ENCODE measurements at regions of chr11 and their contacts with region 1.

Region 1: DNA sequence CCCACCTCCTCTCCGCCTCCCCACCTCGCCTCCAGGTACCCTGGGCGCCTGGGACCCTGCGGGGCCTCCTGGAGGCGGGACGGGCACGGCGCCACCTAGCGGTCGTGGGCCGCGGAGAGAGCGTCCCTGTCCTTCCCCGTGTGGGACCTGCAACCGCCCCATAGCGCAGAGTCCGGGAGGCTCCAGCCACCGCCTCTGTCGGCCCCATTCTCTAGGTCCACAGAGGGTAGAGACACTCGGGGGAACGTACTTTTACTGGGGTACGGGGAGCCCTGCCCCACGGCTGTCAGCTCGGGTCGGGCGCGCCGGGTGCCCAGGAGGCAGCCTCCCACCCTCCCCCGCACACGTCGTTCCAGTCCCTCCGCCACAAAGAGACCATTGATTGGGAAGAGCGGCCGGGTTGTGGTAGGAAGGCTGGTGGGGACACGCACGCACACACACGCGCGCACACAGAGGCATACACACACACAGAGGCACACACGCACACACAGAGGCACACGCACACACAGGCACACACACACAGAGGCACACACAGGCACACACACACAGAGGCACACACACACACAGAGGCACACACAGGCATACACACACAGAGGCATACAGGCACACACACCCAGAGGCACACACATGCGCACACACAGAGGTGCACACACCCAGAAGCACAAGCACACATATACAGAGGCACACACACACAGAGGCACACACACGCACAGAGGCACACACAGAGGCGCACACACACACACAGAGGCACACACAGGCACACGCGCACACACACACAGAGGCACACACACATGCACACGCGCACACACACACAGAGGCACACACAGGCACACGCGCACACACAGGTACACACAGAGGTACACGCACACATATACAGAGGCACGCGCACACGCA is 12.6 kb upstream of the NECTIN1 start:
- DNase-seq: no peak
- H3K4me3 ChIP-seq: peak overlapping the region; percentile 36 to 39
- H3K27ac ChIP-seq: no peak overlapping the region
- H3K4me1 ChIP-seq: peaks cover 0 to 7% of the 10 kb centered on the region in 2 donors
- H3K27me3 ChIP-seq: no peaks in the 10 kb centered on the region
- CTCF ChIP-seq: peak; percentile 45 to 75 (median 67)

Region 2: DNA sequence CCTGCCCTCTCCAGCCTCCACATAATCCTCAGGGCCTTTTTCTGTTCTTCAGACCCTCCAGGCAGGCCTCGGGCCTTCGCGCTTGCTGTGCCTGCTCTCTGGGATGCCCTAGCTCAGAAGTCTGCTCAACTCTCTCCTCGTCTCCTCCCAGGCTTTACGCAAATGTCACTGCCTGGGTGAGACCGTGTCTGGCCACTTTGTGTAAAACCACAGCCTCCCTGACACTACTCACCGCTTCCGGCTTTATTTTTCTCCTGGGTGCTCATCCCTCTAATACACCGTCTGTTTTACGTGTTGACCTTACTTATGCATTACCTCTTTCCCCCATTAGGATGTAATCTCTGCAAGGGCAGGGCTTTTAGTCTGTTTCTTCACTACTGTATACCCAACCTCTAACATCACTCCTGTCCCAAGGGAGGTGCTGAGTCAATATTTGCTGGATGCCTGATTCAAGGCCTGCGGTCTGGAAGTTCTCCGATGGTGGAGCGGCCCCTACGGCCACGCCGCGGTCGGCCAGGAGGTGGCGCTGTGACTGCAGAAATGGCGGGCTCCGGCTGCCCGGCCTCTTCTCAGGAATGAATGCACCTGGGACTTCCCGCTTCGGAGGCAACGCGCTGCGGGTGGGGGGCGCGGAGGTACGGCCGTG is 260.5 kb before region 1 on chr11:
- intact Hi-C with region 1: loop called (anchors 5 kb)
- DNase-seq: peak; percentile 22 to 89
- H3K4me3 ChIP-seq: no peak overlapping the region
- H3K27ac ChIP-seq: no peak overlapping the region
- H3K4me1 ChIP-seq: no peaks in the 10 kb centered on the region
- H3K27me3 ChIP-seq: no peaks in the 10 kb centered on the region
- CTCF ChIP-seq: peak; percentile 82 to 92 (median 91)

Measured in ascending aorta (tissue), 2 donors.